HepG2 (cell line): ENCODE measurements at regions of chrX and their contacts with region 1.

Region 1: DNA sequence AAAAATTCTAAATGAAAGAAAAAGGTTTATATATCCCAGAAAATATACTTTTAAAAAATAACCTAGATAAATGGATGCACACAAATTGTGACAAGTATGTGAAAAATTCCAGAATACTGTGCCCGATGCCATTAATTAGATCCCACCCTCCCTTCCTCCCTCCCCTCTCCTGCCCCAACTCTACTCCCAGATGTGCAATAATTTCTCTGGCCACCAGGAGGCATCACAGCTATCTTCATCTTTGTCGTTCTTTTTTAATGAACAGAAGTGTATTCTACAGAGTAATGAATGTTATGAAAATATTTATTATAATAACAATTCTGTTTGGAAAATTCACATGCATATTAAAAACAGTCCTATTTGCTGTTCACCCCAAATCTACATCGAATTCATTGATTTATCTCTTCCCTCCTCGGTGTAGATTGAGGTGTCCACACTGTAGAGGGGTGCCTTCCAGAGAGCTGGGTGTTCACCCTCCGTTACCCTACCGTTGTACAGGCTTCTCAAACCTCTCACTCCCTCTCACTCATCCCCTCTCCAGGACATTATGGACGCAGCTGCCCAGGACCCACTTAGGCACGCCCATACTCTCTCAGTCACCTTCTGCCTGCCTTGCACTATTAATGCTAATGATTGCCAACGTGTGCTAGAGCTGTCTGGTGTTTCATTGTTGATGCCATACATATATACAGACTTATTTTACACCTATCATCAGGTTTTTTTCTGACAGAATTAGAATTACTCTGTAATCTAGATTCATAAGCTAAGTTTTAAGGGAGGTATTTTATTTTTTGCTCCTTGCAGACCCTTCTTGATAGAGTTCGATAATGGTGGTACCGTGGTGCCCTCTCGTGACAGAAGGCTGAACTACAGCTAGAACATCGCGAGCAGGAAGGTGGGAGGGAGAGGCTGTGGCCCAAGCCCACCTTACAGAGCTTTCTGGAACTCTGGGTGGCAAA is 14.1 kb downstream of the RAB40AL start:
- DNase-seq: peak; percentile 27
- ATAC-seq: peak; percentile 93
- H3K4me3 ChIP-seq: peak overlapping the region in 1 of 3 experiments; percentile 16; a peak in 2 of 6 replicates
- H3K27ac ChIP-seq: no peak overlapping the region
- H3K4me1 ChIP-seq: no peaks in the 10 kb centered on the region
- H3K27me3 ChIP-seq: no peaks in the 10 kb centered on the region
- CTCF ChIP-seq: peak; percentile 53
- EP300 ChIP-seq: no peak
- POLR2A ChIP-seq: no peak
- RAD21 ChIP-seq: no peak

Region 2: DNA sequence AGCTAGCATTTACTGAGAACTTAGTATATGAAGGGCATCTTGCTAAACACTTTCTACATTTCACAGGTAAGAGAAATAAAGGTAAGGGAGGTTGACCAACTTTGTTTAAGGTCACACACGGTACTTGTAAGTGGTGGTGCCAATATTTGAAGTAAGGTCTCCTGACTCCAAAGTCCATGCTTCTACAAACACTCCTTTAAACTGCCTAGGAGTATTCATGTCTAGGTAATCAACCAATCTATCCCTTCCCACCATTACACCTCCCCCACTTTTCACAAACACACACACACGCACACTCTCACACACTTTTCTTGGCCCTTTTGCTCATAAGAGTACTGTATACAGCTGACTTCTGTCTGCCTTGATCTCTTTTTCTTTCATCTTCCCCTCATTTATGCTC is 105.7 kb after region 1 on chrX:
- CTCF ChIA-PET with region 1: no interaction called
- POLR2A ChIA-PET with region 1: no interaction called
- in situ Hi-C with region 1: no loop called
- intact Hi-C with region 1: loop called (anchors 10 kb)
- DNase-seq: peak; percentile 71
- ATAC-seq: peak; percentile 86
- H3K4me3 ChIP-seq: peak overlapping the region in 1 of 3 experiments; percentile 21; a peak in 1 of 6 replicates
- H3K27ac ChIP-seq: peak overlapping the region; percentile 66
- H3K4me1 ChIP-seq: peaks cover 39% of the 10 kb centered on the region
- H3K27me3 ChIP-seq: no peaks in the 10 kb centered on the region
- CTCF ChIP-seq: no peak
- EP300 ChIP-seq: peak in 1 of 2 experiments; percentile 46; a peak in 1 of 4 replicates
- POLR2A ChIP-seq: no peak
- RAD21 ChIP-seq: no peak

Region 3: DNA sequence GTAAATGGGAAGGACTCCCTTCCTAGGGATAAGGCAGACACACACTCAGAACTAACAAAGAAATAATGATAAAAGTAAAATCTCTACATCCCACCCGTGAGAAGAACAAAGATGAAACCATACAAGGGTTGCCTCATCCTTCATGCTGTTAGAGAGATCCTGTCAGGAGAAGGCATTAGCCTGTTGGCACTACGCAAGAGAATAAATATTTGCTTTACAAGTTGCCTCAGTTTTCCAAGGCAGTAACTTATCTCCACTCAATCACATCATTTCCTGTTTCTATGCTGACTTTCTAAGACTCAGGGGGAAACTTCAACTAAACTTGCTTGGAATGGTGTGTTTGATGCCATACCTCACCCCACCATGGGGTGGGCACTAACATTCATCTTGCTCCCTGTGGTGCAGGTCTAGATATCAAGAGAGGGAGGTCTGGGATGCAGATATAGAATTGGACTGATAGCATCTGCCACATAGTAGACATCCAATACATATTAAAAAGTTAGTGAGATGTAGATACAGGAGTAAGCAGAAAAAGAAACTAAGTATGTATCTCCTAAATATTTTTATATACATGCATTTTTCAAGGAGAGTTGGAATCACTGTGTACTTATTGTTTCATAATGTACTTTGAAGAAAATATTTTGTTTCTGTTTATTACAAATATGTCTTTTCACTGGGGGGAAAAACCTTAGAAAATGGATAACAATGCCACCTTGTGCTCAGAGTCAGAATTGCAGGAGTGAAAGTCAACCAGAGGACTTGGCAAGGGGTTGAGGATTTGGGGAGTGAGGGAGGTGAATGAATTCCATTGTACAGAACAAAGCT is 206.5 kb after region 1 on chrX:
- CTCF ChIA-PET with region 1: interaction called, 18 read pairs
- POLR2A ChIA-PET with region 1: no interaction called
- in situ Hi-C with region 1: loop called (anchors 10 kb)
- intact Hi-C with region 1: loop called (anchors 1 kb)
- DNase-seq: peak; percentile 6
- ATAC-seq: no peak
- H3K4me3 ChIP-seq: no peak overlapping the region
- H3K27ac ChIP-seq: no peak overlapping the region
- H3K4me1 ChIP-seq: no peaks in the 10 kb centered on the region
- H3K27me3 ChIP-seq: no peaks in the 10 kb centered on the region
- CTCF ChIP-seq: peak; percentile 59
- EP300 ChIP-seq: no peak
- POLR2A ChIP-seq: no peak
- RAD21 ChIP-seq: no peak

Region 4: GRCh38 chrX:103175944-103176753 is 225.0 kb after region 1 on chrX:
- CTCF ChIA-PET with region 1: interaction called, 8 read pairs
- POLR2A ChIA-PET with region 1: no interaction called
- in situ Hi-C with region 1: loop called (anchors 10 kb)
- intact Hi-C with region 1: loop called (anchors 1 kb)
- DNase-seq: peak; percentile 11
- ATAC-seq: peak; percentile 79
- H3K4me3 ChIP-seq: peak overlapping the region in 1 of 3 experiments; percentile 33; a peak in 1 of 6 replicates
- H3K27ac ChIP-seq: no peak overlapping the region
- H3K4me1 ChIP-seq: no peaks in the 10 kb centered on the region
- H3K27me3 ChIP-seq: no peaks in the 10 kb centered on the region
- CTCF ChIP-seq: peak; percentile 68
- EP300 ChIP-seq: no peak
- POLR2A ChIP-seq: no peak
- RAD21 ChIP-seq: 0 out of 2 replicates have a peak, but pooled peaks have one; percentile 14